Activated naive CD8-positive, alpha-beta T cell treated with anti-CD3 and anti-CD28 coated beads, Interleukin-2, amount 10 ng/mL, durations not matched to agents 7 days and 5 days (primary cell): ENCODE measurements at regions of chr16 and their contacts with region 1.

Region 1: DNA sequence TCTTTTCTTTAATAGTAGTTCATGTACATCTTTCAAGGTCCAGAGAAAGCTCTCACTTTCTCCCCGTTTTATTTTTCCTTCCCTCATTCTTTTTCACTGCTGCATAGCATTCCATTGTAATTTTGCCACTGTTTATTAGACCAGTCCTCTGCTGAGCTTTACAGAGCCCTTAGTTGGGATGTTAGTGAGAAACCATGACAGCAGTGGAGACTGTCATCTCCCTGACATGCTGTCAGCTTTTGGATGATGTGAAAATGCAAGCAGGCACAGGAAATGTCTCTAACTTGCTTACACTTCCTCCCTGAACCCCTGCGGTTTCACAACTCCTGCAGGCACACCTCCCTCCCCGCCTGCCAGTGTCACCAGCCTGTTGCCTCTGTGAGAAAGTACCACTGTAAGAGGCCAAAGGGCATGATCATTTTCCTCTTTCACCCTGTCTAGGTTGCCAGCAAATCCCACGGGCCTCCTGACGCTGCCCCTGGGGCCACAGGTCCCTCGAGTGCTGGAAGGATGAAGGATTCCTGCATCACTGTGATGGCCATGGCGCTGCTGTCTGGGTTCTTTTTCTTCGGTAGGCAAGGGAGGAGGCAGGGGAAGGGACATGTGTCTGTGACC is at the start of gene ITGAL:
- DNase-seq: peak; percentile 72
- ATAC-seq: peak; percentile 82
- H3K4me3 Mint-ChIP-seq: peak within 1 kb of the TSS; percentile 100
- H3K27ac Mint-ChIP-seq: peak within 1 kb of the TSS; percentile 92
- H3K4me1 Mint-ChIP-seq: peaks cover 47% of the 10 kb centered on the region
- H3K27me3 Mint-ChIP-seq: no peaks in the 10 kb centered on the region
- total RNA-seq, gene ITGAL: 662 to 664 TPM

Region 2: GRCh38 chr16:30445408-30446202 is 26.8 kb before region 1 on chr16 and contains the start of gene SEPHS2:
- POLR2A ChIA-PET with region 1: interaction called, 32 read pairs
- DNase-seq: peak; percentile 95
- ATAC-seq: peak; percentile 95
- H3K4me3 Mint-ChIP-seq: peak within 1 kb of the TSS; percentile 88
- H3K27ac Mint-ChIP-seq: peak within 1 kb of the TSS; percentile 90
- H3K4me1 Mint-ChIP-seq: peaks cover 39% of the 10 kb centered on the region
- H3K27me3 Mint-ChIP-seq: no peaks in the 10 kb centered on the region
- total RNA-seq, gene SEPHS2: 59.4 to 59.8 TPM

Region 3: GRCh38 chr16:30491744-30492308 is 19.4 kb after region 1 on chr16:
- POLR2A ChIA-PET with region 1: interaction called, 25 read pairs
- DNase-seq: no peak
- ATAC-seq: peak; percentile 89
- H3K4me3 Mint-ChIP-seq: peak overlapping the region; percentile 43
- H3K27ac Mint-ChIP-seq: peak overlapping the region; percentile 91
- H3K4me1 Mint-ChIP-seq: peaks cover 34% of the 10 kb centered on the region
- H3K27me3 Mint-ChIP-seq: no peaks in the 10 kb centered on the region